Motor neuron (in vitro differentiated cells): ENCODE measurements at regions of chr12 and their contacts with region 1.

Region 1: DNA sequence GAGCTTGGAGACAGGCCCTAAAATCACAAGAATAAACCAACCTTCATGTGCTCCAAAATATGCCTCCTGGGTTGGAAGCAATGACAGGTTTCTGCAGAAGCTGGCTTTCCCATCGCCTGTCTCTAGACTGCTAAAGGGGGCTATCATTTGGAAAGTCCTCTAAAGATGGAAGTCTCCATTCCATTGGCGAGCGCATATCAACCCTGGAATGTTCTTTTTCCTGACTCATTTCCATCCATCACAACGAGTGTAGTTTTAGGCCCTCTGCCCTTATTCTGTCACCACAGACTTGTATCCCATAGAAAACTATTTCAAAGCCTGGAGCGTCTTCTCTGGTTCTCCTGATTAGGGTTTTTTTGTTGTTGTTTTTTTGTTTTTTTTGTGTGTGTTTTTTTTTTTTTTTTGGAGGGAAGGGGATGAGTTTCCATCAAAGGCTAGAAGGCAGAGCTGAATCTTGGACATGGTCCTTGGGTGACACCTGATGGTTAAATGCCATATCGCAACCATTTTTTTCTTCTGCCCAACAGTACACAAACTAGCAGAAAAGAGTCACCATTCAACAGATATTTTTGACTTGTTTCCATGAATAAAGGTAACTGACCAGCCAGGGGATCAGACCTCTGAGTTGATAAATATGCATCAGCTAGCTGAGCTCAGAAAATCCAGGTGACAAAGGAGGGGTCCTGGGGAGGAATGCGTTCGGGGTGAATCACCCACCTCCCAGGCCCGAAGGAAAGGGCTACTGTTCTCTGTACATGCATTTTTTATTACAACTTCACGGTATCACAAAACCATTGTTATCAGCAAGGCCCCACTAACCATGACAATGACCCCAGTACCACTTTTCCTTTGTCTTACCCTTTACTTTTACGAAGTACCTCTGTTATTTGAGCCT is 40.5 kb downstream of the KCNA5 start:
- ATAC-seq: peak; percentile 48 to 71 (median 58)
- H3K4me3 ChIP-seq: no peak overlapping the region
- H3K27ac ChIP-seq: no peak overlapping the region
- H3K4me1 ChIP-seq: no peaks in the 10 kb centered on the region

Region 2: DNA sequence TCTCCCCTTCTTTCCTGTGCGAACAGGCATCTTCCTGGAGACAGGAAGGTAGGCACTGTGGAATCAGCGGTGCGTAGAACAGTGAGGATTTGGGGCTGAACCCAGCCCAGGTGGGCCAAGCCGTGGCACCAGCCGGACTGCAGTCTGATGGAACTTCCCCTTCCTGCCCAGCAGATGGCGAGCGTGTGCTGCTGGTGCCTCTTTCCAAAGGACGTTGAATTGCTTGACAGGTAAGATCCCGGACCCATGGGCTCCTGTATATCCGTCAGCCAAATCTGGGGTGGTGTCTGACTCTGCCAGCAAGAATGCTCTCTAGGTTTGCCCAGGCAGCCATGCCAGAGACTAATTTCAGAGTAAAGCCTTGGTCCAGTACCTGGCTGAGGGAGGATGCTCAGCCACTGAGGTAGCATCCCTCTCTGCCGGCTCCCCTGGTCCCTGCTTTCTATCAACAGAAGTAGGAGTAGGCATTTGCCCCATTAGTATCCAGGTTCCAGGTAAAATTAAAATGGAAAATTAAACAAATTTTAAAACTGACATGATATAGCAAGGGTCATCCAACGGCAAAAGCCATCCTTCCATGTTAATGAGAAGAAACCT is 61.6 kb before region 1 on chr12:
- in situ Hi-C with region 1: loop called in 2 of 9 experiments (anchors 5 to 10 kb)
- ATAC-seq: peak; percentile 39 to 81 (median 54)
- H3K4me3 ChIP-seq: no peak overlapping the region
- H3K27ac ChIP-seq: no peak overlapping the region
- H3K4me1 ChIP-seq: peaks cover 4 to 5% of the 10 kb centered on the region in 2 donors

Region 3: DNA sequence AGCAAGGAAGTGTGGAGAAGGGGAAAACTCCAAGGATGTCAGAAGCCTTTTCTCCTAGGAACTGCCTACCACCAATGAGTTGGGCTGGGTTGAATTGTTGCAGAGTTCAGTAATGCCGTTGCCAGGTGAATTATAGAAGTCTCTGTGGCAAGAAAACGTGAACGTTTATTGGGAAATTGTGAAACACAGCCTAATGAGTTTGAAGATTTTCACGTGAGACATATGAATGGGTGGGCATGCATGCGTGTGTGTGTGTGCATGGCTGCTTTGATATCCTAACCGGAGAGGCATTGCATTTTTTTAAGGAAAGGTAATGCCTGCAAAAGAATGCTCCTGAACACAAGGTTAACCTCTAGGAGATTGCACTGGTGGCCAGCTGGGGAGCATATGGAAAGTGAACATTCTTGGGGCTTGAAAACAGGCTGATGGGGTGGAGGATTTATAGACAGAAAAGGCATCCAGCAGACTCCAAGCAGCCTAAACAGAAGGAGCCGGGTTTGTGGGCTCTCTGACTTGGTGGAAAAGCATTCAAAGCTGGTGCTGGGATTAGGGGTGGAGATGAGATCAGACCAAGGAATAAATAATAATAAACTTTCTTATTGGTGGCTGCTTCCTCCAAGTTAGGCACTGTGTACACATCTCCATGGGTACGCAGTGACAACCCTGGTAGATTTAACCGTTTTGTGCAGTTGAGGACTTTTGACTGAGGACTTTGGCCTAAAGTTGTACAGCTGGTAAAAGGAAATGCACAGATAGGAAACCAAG is 415.5 kb after region 1 on chr12:
- in situ Hi-C with region 1: no loop called
- ATAC-seq: peak in 3 of 8 experiments; percentile 7 to 36 (median 13)
- H3K4me3 ChIP-seq: no peak overlapping the region
- H3K27ac ChIP-seq: no peak overlapping the region
- H3K4me1 ChIP-seq: no peaks in the 10 kb centered on the region